Mammary epithelial cell (primary cell): ENCODE measurements at regions of chr15 and their contacts with region 1.

Region 1: GRCh38 chr15:85475317-85475701 is 94.9 kb downstream of the AKAP13 start:
- DNase-seq: no peak
- H3K4me3 ChIP-seq: no peak overlapping the region
- H3K27ac ChIP-seq: no peak overlapping the region
- H3K4me1 ChIP-seq: peaks cover 68% of the 10 kb centered on the region
- H3K27me3 ChIP-seq: no peaks in the 10 kb centered on the region
- CTCF ChIP-seq: no peak

Region 2: DNA sequence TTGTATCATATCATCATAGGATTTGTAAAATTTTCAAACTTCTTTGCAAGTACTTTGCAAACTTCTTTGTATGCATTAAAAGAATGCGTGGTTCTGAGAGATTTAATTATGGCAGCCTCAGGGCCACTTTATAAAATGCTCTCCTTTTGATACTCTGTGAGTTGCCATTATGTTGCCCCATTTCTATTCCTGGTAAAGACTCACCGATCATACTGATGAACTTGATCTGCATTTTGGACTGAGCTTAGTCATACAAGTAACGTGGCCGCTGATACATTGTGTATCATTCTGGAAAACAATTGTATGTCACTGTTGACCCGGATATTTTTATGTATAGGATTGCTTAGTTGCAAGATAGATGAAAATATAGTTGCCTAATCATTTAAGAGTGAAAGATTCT is 56.1 kb before region 1 on chr15:
- CTCF ChIA-PET with region 1: interaction called, 3 read pairs
- dilution Hi-C with region 1: no loop called
- in situ Hi-C with region 1: no loop called
- intact Hi-C with region 1: loop called (anchors 5 kb)
- DNase-seq: no peak
- H3K4me3 ChIP-seq: no peak overlapping the region
- H3K27ac ChIP-seq: no peak overlapping the region
- H3K4me1 ChIP-seq: peaks cover 24% of the 10 kb centered on the region
- H3K27me3 ChIP-seq: no peaks in the 10 kb centered on the region
- CTCF ChIP-seq: no peak